Panc1 (cell line): ENCODE measurements at regions of chr11 and their contacts with region 1.

Region 1: DNA sequence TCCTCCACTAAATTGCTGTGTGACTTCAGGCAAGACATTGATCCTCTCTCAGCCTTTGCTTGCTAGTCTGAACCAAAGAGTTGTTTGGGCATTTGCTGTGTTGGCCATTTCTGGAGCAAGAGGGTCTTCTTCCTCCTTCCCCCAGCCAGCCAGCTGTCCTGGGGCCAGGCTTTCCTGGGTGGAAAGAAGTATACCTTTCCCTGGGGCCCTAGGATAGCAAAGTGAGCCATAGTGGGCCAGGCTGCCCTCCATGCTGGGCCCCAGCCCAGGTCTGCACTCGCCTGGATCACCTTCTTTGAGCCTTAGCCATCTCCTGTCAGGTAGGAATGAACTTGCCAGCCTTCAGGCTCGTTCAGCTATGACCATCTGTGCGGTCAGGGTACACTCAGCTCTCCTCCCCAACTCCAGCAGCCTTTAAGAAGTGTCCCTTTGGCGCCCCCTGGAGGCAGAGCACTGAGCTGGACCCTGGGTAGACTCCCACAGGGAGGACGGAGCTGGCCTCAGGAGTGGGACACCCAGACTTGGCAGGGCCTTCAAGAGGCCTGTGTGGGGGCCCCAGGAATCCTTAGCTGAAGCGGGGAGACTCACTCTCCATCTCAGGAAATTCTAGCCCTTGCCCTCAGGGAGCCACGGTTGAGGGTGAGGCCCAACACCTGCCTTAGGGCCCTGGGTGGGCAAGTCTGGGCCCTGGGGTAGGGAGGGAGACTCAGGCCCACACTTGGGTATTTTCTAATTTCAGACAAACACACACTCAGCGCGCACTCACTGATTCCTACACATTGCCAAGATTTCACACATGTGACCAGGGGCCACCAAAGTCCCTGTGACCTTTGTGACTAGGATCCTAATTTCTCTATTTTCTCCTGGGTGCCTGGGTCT is 35.6 kb upstream of the TPBGL start:
- DNase-seq: peak; percentile 38
- ATAC-seq: peak; percentile 95
- H3K4me3 ChIP-seq: no peak overlapping the region
- H3K27ac ChIP-seq: no peak overlapping the region
- H3K4me1 ChIP-seq: no peaks in the 10 kb centered on the region
- H3K27me3 ChIP-seq: peaks cover 32% of the 10 kb centered on the region
- CTCF ChIP-seq: peak; percentile 96

Region 2: GRCh38 chr11:74909385-74909784 is 295.5 kb before region 1 on chr11:
- CTCF ChIA-PET with region 1: no interaction called
- POLR2A ChIA-PET with region 1: no interaction called
- in situ Hi-C with region 1: loop called (anchors 25 kb)
- intact Hi-C with region 1: no loop called
- DNase-seq: no peak
- ATAC-seq: no peak
- H3K4me3 ChIP-seq: no peak overlapping the region
- H3K27ac ChIP-seq: no peak overlapping the region
- H3K4me1 ChIP-seq: no peaks in the 10 kb centered on the region
- H3K27me3 ChIP-seq: no peaks in the 10 kb centered on the region
- CTCF ChIP-seq: no peak

Region 3: DNA sequence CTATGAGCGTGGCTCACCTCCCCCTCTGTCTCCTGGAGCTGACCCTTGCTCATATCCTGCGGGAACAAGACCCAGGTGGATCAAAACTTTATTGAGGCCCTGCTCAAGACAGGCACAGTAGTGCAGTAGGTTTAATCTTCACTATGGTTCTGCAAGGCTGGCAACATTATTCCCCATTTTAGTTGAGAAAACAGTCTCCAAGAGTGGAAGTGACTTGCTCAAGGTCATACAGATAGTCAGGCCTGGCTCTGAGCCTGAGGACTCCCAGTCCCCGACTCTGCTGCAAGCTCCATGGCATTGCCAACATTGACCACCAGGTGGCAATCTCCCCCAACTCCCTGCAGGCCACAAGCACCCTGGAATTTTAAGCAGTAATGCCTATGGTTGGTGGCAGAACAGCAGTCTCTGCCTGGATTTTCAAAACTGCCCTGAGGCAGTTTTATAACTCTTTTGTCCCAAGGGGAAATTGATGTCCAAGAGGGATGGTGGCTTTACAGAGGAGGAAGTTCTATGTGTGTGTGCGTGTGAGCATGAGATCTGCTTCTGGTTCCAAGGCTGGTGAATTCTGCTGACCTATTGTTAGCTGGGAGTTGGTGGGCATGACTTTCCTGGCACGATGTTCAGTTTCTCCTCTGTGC is 182.0 kb before region 1 on chr11:
- CTCF ChIA-PET with region 1: interaction called, 21 read pairs
- POLR2A ChIA-PET with region 1: no interaction called
- in situ Hi-C with region 1: no loop called
- intact Hi-C with region 1: no loop called
- DNase-seq: peak; percentile 82
- ATAC-seq: peak; percentile 96
- H3K4me3 ChIP-seq: no peak overlapping the region
- H3K27ac ChIP-seq: no peak overlapping the region
- H3K4me1 ChIP-seq: no peaks in the 10 kb centered on the region
- H3K27me3 ChIP-seq: no peaks in the 10 kb centered on the region
- CTCF ChIP-seq: peak; percentile 99

Region 4: GRCh38 chr11:75100314-75100713 is 104.6 kb before region 1 on chr11:
- CTCF ChIA-PET with region 1: interaction called, 3 read pairs
- POLR2A ChIA-PET with region 1: no interaction called
- in situ Hi-C with region 1: loop called (anchors 25 kb)
- intact Hi-C with region 1: no loop called
- DNase-seq: no peak
- ATAC-seq: peak; percentile 82
- H3K4me3 ChIP-seq: no peak overlapping the region
- H3K27ac ChIP-seq: no peak overlapping the region
- H3K4me1 ChIP-seq: no peaks in the 10 kb centered on the region
- H3K27me3 ChIP-seq: peaks cover 6% of the 10 kb centered on the region
- CTCF ChIP-seq: no peak

Region 5: DNA sequence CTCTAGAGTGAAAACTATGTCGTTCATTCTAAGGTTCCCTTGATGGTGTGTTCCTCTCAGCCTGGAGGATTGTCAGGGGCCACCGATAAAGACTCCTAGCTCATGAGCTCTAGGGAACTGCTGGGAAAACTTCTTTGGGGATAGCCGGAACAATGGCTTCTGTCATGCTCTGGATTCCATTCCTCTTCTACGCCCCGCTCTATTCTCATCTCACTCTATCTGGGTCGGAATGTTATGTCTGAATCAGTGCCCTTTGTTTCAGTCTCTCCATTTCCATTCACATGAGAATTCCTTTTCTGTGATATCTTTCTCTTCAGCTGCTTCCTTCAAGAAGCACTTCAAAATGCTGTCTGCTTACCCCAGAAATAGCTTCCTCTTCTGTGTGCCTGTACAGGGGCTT is 70.9 kb before region 1 on chr11:
- CTCF ChIA-PET with region 1: interaction called, 59 read pairs
- POLR2A ChIA-PET with region 1: interaction called, 14 read pairs
- in situ Hi-C with region 1: no loop called
- intact Hi-C with region 1: no loop called
- DNase-seq: no peak
- ATAC-seq: no peak; the same call in 1 of the 2 replicates
- H3K4me3 ChIP-seq: no peak overlapping the region
- H3K27ac ChIP-seq: no peak overlapping the region
- H3K4me1 ChIP-seq: no peaks in the 10 kb centered on the region
- H3K27me3 ChIP-seq: peaks cover 4% of the 10 kb centered on the region; the same call in 1 of the 2 replicates
- CTCF ChIP-seq: no peak

Region 6: GRCh38 chr11:75147875-75148263 is 57.1 kb before region 1 on chr11:
- CTCF ChIA-PET with region 1: interaction called, 59 read pairs
- POLR2A ChIA-PET with region 1: interaction called, 5 read pairs
- in situ Hi-C with region 1: no loop called
- intact Hi-C with region 1: loop called (anchors 2 kb)
- DNase-seq: no peak
- ATAC-seq: no peak
- H3K4me3 ChIP-seq: no peak overlapping the region
- H3K27ac ChIP-seq: no peak overlapping the region
- H3K4me1 ChIP-seq: peaks cover 7% of the 10 kb centered on the region
- H3K27me3 ChIP-seq: peaks cover 2% of the 10 kb centered on the region; the same call in 1 of the 2 replicates
- CTCF ChIP-seq: no peak

Region 7: GRCh38 chr11:75241036-75241905 is 36.3 kb after region 1 on chr11:
- CTCF ChIA-PET with region 1: interaction called, 12 read pairs
- POLR2A ChIA-PET with region 1: no interaction called
- in situ Hi-C with region 1: no loop called
- intact Hi-C with region 1: no loop called
- DNase-seq: peak; percentile 60
- ATAC-seq: peak; percentile 92
- H3K4me3 ChIP-seq: peak overlapping the region; percentile 42 to 53
- H3K27ac ChIP-seq: no peak overlapping the region
- H3K4me1 ChIP-seq: no peaks in the 10 kb centered on the region
- H3K27me3 ChIP-seq: no peaks in the 10 kb centered on the region; the same call in 1 of the 2 replicates
- CTCF ChIP-seq: peak; percentile 100

Region 8: GRCh38 chr11:75733431-75734107 is 528.6 kb after region 1 on chr11:
- CTCF ChIA-PET with region 1: no interaction called
- POLR2A ChIA-PET with region 1: no interaction called
- in situ Hi-C with region 1: no loop called
- intact Hi-C with region 1: no loop called
- DNase-seq: no peak
- ATAC-seq: 0 out of 2 replicates have a peak, but pooled peaks have one; percentile 12
- H3K4me3 ChIP-seq: no peak overlapping the region
- H3K27ac ChIP-seq: no peak overlapping the region
- H3K4me1 ChIP-seq: no peaks in the 10 kb centered on the region
- H3K27me3 ChIP-seq: peaks cover 20% of the 10 kb centered on the region
- CTCF ChIP-seq: no peak